ENCODE measurements at regions of chr17 and their contacts with region 1.

Region 1: DNA sequence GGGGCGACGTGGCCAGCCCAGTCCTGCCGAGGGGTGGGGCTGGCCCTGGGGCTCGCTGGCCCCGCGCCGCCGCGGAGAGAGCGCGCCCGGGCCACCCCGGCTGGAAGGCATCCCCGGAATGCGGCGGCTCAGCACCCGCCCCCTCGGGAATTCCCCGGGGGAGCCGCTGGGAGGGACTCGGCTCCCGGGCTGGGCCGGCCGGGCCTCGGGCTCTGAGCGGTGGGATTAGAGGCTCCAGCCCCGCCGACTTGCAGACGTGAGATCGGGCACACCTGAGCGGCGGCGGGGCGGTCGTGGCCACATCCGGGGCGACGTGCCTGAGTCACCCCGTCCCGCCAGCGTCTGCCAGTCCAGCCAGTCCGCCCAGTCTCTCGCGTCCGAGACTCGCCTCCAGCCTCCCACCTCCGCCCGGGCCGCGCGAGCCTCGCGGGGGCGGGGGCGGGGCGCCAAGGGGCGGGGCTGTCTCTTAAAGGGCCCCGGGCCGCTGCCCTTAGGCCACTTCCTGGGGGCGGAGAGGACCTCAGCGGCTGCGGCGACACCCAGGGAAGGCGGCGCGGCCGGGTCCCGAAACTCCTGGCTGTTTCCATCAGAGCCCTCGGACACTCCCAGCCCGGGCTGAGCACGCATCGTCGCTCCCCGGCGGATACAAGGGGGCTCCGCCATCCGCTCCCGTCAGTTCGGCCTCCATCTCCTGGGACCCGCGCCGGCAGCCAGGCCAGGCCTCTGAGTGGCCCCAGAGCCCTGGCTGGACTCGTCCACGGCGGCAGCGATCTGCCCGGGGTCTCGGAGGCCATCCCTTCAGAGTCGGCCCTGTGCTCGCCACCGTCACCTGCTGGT is at the start of gene KCTD11:
- DNase-seq: peak; percentile 85 to 96 (median 90)
- ATAC-seq: peak; percentile 82
- H3K4me3 ChIP-seq: peak within 1 kb of the TSS; percentile 50 to 90
- H3K27ac ChIP-seq: peak within 1 kb of the TSS; percentile 92 to 97
- H3K4me1 ChIP-seq: peaks cover 19 to 58% of the 10 kb centered on the region in 2 donors
- H3K27me3 ChIP-seq: no peaks in the 10 kb centered on the region
- CTCF ChIP-seq: no peak
- polyA plus RNA-seq, gene KCTD11: 8.3 to 13.1 (median 9.9) TPM

Region 2: GRCh38 chr17:7314719-7315569 is 36.9 kb before region 1 on chr17 and contains the start of gene GPS2:
- intact Hi-C with region 1: no loop called
- DNase-seq: peak; percentile 78 to 98 (median 92)
- ATAC-seq: peak; percentile 94
- H3K4me3 ChIP-seq: peak within 1 kb of the TSS; percentile 79 to 86
- H3K27ac ChIP-seq: peak within 1 kb of the TSS; percentile 92 to 96
- H3K4me1 ChIP-seq: peaks cover 20 to 52% of the 10 kb centered on the region in 2 donors
- H3K27me3 ChIP-seq: no peaks in the 10 kb centered on the region
- CTCF ChIP-seq: no peak
- polyA plus RNA-seq, gene GPS2: 73.0 to 102 (median 81.9) TPM

Region 3: DNA sequence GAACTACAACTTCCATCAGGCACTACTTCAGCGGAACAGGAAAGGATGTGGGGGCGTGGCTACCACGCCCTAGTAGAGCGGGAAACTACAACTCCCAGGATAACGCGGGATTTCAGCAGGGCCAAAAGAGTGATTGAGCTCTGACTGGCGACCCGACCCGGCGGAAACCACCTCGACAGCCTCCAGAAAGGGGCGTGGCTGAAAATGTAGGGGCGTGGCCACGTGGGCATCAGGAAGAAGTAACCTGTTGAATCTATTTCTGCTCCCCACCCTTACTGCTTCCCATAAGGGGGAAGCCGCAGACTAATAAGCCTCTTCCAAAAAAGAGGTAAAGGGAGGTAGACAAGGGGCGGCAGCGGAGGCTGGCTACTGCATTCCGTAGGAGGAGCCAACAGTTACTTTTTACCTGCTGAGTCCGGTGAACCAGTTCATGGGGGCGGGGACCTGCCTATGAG is 83.4 kb after region 1 on chr17 and contains the start of gene TMEM102:
- intact Hi-C with region 1: loop called in 1 of 2 experiments (anchors 10 kb)
- DNase-seq: peak; percentile 80 to 97 (median 96)
- ATAC-seq: peak; percentile 88
- H3K4me3 ChIP-seq: peak within 1 kb of the TSS; percentile 35 to 72
- H3K27ac ChIP-seq: peak within 1 kb of the TSS; percentile 61 to 89
- H3K4me1 ChIP-seq: peaks cover 23 to 53% of the 10 kb centered on the region in 2 donors
- H3K27me3 ChIP-seq: peaks cover 13 to 23% of the 10 kb centered on the region in 2 donors
- CTCF ChIP-seq: no peak
- polyA plus RNA-seq, gene TMEM102: 2.1 to 3.3 (median 2.6) TPM

Region 4: DNA sequence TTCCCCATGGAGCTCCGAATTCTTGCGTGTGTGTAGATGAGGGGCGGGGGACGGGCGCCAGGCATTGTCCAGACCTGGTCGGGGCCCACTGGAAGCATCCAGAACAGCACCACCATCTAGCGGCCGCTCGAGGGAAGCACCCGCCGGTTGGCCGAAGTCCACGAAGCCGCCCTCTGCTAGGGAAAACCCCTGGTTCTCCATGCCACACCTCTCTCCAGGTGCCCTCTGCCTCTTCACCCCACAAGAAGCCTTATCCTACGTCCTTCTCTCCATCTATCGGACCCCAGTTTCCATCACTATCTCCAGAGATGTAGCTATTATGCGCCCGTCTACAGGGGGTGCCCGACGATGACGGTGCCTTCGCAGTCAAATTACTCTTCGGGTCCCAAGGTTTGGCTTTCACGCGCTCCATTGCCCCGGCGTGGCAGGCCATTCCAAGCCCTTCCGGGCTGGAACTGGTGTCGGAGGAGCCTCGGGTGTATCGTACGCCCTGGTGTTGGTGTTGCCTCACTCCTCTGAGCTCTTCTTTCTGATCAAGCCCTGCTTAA is 209.2 kb after region 1 on chr17:
- intact Hi-C with region 1: loop called in 1 of 2 experiments (anchors 5 kb)
- DNase-seq: peak; percentile 85 to 97 (median 92)
- ATAC-seq: peak; percentile 78
- H3K4me3 ChIP-seq: peak overlapping the region; percentile 82 to 83
- H3K27ac ChIP-seq: peak overlapping the region; percentile 93 to 97
- H3K4me1 ChIP-seq: peaks cover 44 to 75% of the 10 kb centered on the region in 2 donors
- H3K27me3 ChIP-seq: no peaks in the 10 kb centered on the region
- CTCF ChIP-seq: peak; percentile 79 to 86

Measured in left lung (tissue), 14 donors.